Activated CD8-positive, alpha-beta T cell treated with anti-CD3 and anti-CD28 coated beads for 36 hours (primary cell): ENCODE measurements at regions of chr2 and their contacts with region 1.

Region 1: GRCh38 chr2:196277002-196277401 is 105.6 kb upstream of the STK17B start:
- DNase-seq: peak; percentile 60
- ATAC-seq: peak; percentile 18
- H3K4me3 Mint-ChIP-seq: no peak overlapping the region
- H3K27ac Mint-ChIP-seq: peak overlapping the region; percentile 93
- H3K4me1 Mint-ChIP-seq: peaks cover 54% of the 10 kb centered on the region
- H3K27me3 Mint-ChIP-seq: no peaks in the 10 kb centered on the region
- CTCF ChIP-seq: peak; percentile 72

Region 2: DNA sequence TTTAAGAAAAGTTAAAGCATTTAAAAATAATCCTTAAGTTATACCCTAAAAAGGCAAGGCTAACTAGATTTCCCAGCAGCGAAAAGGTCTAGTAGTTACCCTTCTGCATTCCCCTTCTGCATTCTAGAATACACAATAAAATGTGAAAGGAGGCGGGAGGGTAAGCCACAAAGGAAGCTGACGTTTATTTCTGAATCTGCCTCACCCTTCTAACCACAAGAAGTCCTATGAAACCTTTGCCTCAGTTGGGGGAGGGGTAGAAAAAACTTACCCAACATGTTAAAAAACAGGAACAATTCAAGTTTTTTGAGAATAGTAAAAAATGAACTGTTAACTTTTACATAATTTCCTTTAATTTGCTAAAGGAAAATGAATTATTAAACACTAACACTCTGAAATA is 116.9 kb before region 1 on chr2:
- CTCF ChIA-PET with region 1: interaction called, 32 read pairs
- POLR2A ChIA-PET with region 1: interaction called, 23 read pairs
- intact Hi-C with region 1: loop called (anchors 5 kb)
- DNase-seq: peak; percentile 84
- ATAC-seq: peak; percentile 40
- H3K4me3 Mint-ChIP-seq: peak overlapping the region; percentile 99
- H3K27ac Mint-ChIP-seq: peak overlapping the region; percentile 83
- H3K4me1 Mint-ChIP-seq: peaks cover 49% of the 10 kb centered on the region
- H3K27me3 Mint-ChIP-seq: no peaks in the 10 kb centered on the region
- CTCF ChIP-seq: no peak

Region 3: GRCh38 chr2:196225213-196225612 is 51.8 kb before region 1 on chr2:
- CTCF ChIA-PET with region 1: interaction called, 14 read pairs
- POLR2A ChIA-PET with region 1: interaction called, 5 read pairs
- intact Hi-C with region 1: no loop called
- DNase-seq: no peak
- ATAC-seq: no peak
- H3K4me3 Mint-ChIP-seq: peak overlapping the region; percentile 22
- H3K27ac Mint-ChIP-seq: peak overlapping the region; percentile 61
- H3K4me1 Mint-ChIP-seq: peaks cover 84% of the 10 kb centered on the region
- H3K27me3 Mint-ChIP-seq: no peaks in the 10 kb centered on the region
- CTCF ChIP-seq: no peak

Region 4: GRCh38 chr2:196239622-196240587 is 37.1 kb before region 1 on chr2:
- CTCF ChIA-PET with region 1: interaction called, 23 read pairs
- POLR2A ChIA-PET with region 1: interaction called, 4 read pairs
- intact Hi-C with region 1: loop called (anchors 2 kb)
- DNase-seq: peak; percentile 94
- ATAC-seq: peak; percentile 64
- H3K4me3 Mint-ChIP-seq: peak overlapping the region; percentile 81
- H3K27ac Mint-ChIP-seq: peak overlapping the region; percentile 87
- H3K4me1 Mint-ChIP-seq: peaks cover 70% of the 10 kb centered on the region
- H3K27me3 Mint-ChIP-seq: no peaks in the 10 kb centered on the region
- CTCF ChIP-seq: no peak

Region 5: DNA sequence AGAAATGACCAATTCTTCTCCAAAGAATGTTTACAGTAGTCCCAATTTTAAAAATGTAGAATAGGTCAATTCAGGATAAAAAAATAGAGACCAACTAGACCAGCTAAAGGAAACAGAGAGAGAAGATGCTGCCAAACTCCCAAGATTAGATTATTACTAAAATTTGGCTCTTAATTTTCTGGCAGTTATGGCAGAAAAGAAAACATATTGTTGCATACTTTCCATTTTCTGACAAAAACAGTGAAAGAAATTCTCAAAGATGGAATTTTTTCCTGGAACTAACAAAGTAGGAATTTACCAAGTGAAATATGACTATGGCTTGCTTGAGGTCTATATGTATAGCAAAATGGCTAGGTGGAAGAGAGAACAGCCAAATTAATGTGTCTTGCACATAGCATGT is 32.7 kb after region 1 on chr2:
- CTCF ChIA-PET with region 1: no interaction called
- POLR2A ChIA-PET with region 1: no interaction called
- intact Hi-C with region 1: no loop called
- DNase-seq: no peak
- ATAC-seq: no peak
- H3K4me3 Mint-ChIP-seq: no peak overlapping the region
- H3K27ac Mint-ChIP-seq: no peak overlapping the region
- H3K4me1 Mint-ChIP-seq: no peaks in the 10 kb centered on the region
- H3K27me3 Mint-ChIP-seq: peaks cover 2% of the 10 kb centered on the region
- CTCF ChIP-seq: no peak

Region 6: DNA sequence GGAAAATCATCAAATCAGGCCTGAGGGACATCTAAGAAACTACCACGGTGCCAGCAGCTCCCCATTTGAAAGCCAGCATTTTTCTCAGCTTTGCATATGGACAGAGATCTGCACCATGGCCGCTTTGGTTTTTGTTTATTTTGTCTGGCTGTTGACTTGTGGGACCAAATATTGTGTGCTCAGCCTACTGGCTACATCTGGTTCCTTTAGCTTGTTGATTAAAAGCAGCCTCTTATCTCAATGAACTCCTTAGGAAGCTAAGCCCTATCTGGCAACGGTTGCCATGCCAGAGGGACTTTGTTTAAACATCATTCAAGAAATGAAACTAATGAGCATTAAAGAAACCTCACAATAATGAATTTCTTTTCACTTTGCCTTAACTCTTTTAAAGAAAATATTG is 330.1 kb after region 1 on chr2:
- CTCF ChIA-PET with region 1: no interaction called
- POLR2A ChIA-PET with region 1: no interaction called
- intact Hi-C with region 1: no loop called
- DNase-seq: no peak
- ATAC-seq: no peak
- H3K4me3 Mint-ChIP-seq: no peak overlapping the region
- H3K27ac Mint-ChIP-seq: no peak overlapping the region
- H3K4me1 Mint-ChIP-seq: no peaks in the 10 kb centered on the region
- H3K27me3 Mint-ChIP-seq: peaks cover 4% of the 10 kb centered on the region
- CTCF ChIP-seq: no peak